ENCODE measurements at regions of chr2 and their contacts with region 1.

Region 1: GRCh38 chr2:96760036-96760985 is at the start of gene CNNM4:
- DNase-seq: peak; percentile 98
- H3K4me3 ChIP-seq: peak within 1 kb of the TSS in 2 of 3 donors; percentile 1 to 64
- H3K27ac ChIP-seq: peak within 1 kb of the TSS; percentile 2 to 85 (median 67)
- H3K4me1 ChIP-seq: peaks cover 38 to 45% of the 10 kb centered on the region in 2 donors
- H3K27me3 ChIP-seq: no peaks in the 10 kb centered on the region
- CTCF ChIP-seq: peak in 1 of 6 experiments; percentile 24
- POLR2A ChIP-seq: peak in 1 of 2 donors; percentile 82
- total RNA-seq, gene CNNM4: 6.6 to 9.5 (median 7.7) TPM

Region 2: GRCh38 chr2:96739633-96740428 is 20.5 kb before region 1 on chr2 and contains the start of gene LMAN2L:
- intact Hi-C with region 1: loop called (anchors 2 kb)
- DNase-seq: peak; percentile 99
- H3K4me3 ChIP-seq: peak within 1 kb of the TSS; percentile 34 to 85 (median 48)
- H3K27ac ChIP-seq: peak within 1 kb of the TSS in 2 of 3 donors; percentile 65 to 81
- H3K4me1 ChIP-seq: peaks cover 24 to 34% of the 10 kb centered on the region in 2 donors
- H3K27me3 ChIP-seq: no peaks in the 10 kb centered on the region
- CTCF ChIP-seq: no peak
- POLR2A ChIP-seq: peak in 1 of 2 donors; percentile 71
- total RNA-seq, gene LMAN2L: 22.8 to 32.9 (median 29.2) TPM